ENCODE measurements at regions of chr7 and their contacts with region 1.

Region 1: GRCh38 chr7:18180685-18181084 is 153.0 kb upstream of the PRPS1L1 start:
- DNase-seq: no peak
- H3K4me3 ChIP-seq: no peak overlapping the region
- CTCF ChIP-seq: no peak
- POLR2A ChIP-seq: no peak

Region 2: GRCh38 chr7:19262826-19263225 is 1082.1 kb after region 1 on chr7:
- intact Hi-C with region 1: loop called (anchors 5 kb)
- DNase-seq: no peak
- H3K4me3 ChIP-seq: no peak overlapping the region
- CTCF ChIP-seq: no peak
- POLR2A ChIP-seq: no peak